ENCODE measurements at regions of chr9 and their contacts with region 1.

Region 1: DNA sequence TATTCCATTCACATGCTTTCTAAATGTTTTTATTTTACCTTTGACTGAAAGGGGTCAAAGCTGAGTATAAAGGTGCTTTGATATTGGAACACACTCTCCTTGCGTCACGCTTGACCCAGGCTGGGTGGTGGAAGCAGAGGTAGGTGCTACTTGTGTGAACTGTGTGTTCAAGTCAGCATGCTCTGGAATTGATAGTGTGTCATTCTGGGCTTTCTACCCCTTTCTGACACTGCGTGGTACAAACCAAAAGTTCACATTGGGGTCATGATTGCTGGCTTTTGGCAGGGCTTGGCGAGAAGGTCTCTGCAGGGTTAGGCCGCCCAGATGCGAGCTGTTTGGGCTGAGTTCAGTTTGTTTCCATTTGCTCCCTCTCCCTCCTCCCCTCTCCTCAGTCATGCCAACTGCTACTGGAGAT is 131.8 kb downstream of the ADAMTSL1 start:
- DNase-seq: no peak
- ATAC-seq: no peak
- H3K4me3 ChIP-seq: no peak overlapping the region
- H3K27ac ChIP-seq: no peak overlapping the region
- H3K4me1 ChIP-seq: no peaks in the 10 kb centered on the region
- H3K27me3 ChIP-seq: peaks cover 0 to 3% of the 10 kb centered on the region in 2 experiments; a peak in 1 of 5 replicates
- CTCF ChIP-seq: no peak
- EP300 ChIP-seq: no peak
- POLR2A ChIP-seq: no peak
- RAD21 ChIP-seq: no peak

Region 2: DNA sequence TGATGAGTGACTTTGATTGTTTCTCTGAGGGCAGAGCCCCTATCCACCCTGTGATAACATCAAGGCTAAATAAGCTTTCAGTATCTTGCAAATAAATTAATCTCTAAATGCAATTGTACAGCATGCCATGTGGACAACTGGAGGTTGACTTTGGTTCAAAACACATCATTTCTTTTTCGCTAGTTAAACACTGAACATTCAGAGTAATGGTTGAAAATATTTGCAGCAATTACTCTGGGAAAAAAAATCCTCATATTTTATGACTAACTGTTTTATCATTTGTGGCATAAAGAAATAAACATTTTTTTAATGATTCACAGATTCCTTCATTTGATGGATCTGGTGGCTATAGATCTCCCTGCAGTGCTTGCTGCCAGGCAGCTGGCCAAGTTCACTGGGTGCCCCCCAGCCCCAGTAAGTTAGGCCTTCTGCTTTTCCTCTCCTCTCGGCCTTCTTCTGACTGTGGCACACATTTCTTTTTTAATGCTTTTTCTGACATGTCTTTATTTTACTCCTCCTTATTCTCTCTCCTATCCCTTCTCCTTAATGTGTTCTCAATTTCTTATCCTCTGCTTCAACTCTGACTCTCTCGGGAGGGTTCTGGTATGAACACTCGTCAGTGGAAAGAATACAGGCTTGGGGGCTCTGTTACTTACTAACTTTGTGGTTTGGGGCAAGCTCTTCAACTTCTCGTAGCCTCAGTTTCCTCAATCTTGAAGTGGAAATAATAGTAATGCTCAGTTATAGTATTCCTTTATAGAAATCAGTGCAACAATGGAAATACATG is 62.2 kb before region 1 on chr9:
- CTCF ChIA-PET with region 1: no interaction called
- POLR2A ChIA-PET with region 1: no interaction called
- in situ Hi-C with region 1: no loop called
- intact Hi-C with region 1: loop called (anchors 10 kb)
- DNase-seq: no peak
- ATAC-seq: no peak
- H3K4me3 ChIP-seq: no peak overlapping the region
- H3K27ac ChIP-seq: no peak overlapping the region
- H3K4me1 ChIP-seq: no peaks in the 10 kb centered on the region
- H3K27me3 ChIP-seq: no peaks in the 10 kb centered on the region
- CTCF ChIP-seq: no peak
- EP300 ChIP-seq: no peak
- POLR2A ChIP-seq: no peak
- RAD21 ChIP-seq: no peak

Measured in HepG2 (cell line).